Transverse colon (tissue), 4 donors: ENCODE measurements at regions of chr2 and their contacts with region 1.

Region 1: DNA sequence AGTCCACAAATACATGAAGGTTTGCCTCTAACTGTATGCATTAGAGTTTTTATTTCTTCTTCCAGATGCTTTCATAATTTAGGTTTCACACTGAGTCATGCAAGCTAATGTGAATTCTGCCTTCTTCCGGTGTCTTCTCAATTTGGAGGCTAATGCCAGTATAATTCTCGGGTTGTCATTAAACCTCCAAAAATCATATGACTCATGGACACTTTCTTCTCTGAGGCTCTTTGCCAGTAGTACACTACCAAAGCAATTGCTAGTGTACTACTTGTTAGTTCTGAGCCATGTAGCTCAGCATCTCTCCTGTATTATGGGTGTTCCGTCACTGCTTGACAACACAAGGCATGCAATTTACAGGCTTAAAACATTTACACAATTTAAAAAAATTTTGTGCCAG is 137.1 kb downstream of the VWC2L start:
- DNase-seq: no peak
- H3K4me3 ChIP-seq: no peak overlapping the region
- H3K27ac ChIP-seq: no peak overlapping the region
- H3K4me1 ChIP-seq: no peaks in the 10 kb centered on the region
- H3K27me3 ChIP-seq: no peaks in the 10 kb centered on the region
- CTCF ChIP-seq: no peak
- EP300 ChIP-seq: no peak
- POLR2A ChIP-seq: no peak

Region 2: DNA sequence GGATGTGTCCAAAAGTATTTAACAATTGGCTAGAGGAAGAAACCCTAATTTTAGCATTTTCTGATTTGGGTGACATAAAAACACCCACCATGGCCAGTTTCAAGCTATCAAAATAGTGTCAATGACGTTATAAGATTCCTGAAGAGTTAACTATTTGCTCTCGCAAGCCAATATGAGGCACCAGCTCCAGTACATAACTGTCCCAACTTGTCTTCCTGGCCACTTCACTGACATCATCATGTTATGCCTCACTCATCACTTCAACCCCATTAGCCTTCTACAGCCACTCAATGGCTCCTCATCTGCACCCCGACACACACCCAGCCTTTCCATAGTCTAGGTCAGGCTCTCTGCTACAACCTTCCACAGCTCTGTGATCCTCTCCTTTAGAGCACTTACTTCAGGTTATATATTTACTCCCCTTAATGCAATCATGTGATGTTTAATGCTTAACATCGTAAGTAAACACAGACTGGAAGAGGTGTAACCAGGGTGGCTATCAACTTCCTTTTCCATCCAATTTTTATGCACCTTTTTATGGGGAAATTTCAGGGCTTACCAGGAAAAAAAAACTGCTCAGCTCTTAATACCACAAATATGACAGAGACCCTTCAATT is 21.6 kb after region 1 on chr2:
- in situ Hi-C with region 1: no loop called
- intact Hi-C with region 1: loop called (anchors 1 kb)
- DNase-seq: no peak
- H3K4me3 ChIP-seq: no peak overlapping the region
- H3K27ac ChIP-seq: no peak overlapping the region
- H3K4me1 ChIP-seq: peaks cover 0 to 4% (median 0%) of the 10 kb centered on the region in 4 donors
- H3K27me3 ChIP-seq: no peaks in the 10 kb centered on the region
- CTCF ChIP-seq: no peak
- EP300 ChIP-seq: no peak
- POLR2A ChIP-seq: no peak

Region 3: GRCh38 chr2:214601852-214602633 is 54.1 kb after region 1 on chr2:
- in situ Hi-C with region 1: no loop called
- intact Hi-C with region 1: no loop called
- DNase-seq: no peak
- H3K4me3 ChIP-seq: no peak overlapping the region
- H3K27ac ChIP-seq: no peak overlapping the region
- H3K4me1 ChIP-seq: no peaks in the 10 kb centered on the region
- H3K27me3 ChIP-seq: no peaks in the 10 kb centered on the region
- CTCF ChIP-seq: no peak
- EP300 ChIP-seq: no peak
- POLR2A ChIP-seq: no peak

Region 4: GRCh38 chr2:214946949-214947348 is 399.0 kb after region 1 on chr2:
- in situ Hi-C with region 1: no loop called
- intact Hi-C with region 1: no loop called
- DNase-seq: no peak
- H3K4me3 ChIP-seq: no peak overlapping the region
- H3K27ac ChIP-seq: no peak overlapping the region
- H3K4me1 ChIP-seq: no peaks in the 10 kb centered on the region
- H3K27me3 ChIP-seq: no peaks in the 10 kb centered on the region
- CTCF ChIP-seq: no peak
- EP300 ChIP-seq: no peak
- POLR2A ChIP-seq: no peak